ENCODE measurements at regions of chr7 and their contacts with region 1.

Region 1: DNA sequence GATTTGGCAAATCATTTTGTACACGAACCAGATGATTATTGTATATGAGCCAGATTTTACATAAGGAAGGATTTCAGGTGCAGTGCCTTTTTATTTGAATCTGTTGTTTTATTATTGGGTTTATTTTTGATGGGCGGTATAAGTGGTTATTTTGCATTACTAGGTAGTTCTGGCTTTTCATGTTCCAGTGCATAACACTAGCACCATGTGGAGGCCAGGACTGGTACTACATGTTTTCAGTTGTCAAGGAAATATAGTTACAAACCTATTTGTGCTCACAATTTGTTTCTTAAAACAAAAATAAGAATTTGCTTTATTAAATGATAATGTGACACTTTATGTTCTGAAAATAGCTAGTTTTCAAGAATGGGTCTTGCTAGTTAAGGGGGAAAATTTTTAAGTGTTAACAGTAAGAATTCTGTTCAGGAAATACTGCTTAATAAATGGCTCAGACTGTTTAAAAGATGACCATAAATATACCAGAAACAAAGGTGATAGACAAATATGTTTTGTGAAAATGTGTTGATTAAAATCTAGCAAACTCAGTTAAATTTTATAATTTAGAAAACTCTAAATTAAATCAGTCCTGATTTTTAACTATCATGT is 7.1 kb upstream of the SEMA3E start:
- DNase-seq: peak; percentile 54
- H3K4me3 ChIP-seq: no peak overlapping the region
- H3K27ac ChIP-seq: no peak overlapping the region
- H3K4me1 ChIP-seq: no peaks in the 10 kb centered on the region
- H3K27me3 ChIP-seq: peaks cover 35% of the 10 kb centered on the region
- CTCF ChIP-seq: peak; percentile 85

Region 2: GRCh38 chr7:83410989-83411591 is 245.0 kb before region 1 on chr7:
- CTCF ChIA-PET with region 1: no interaction called
- POLR2A ChIA-PET with region 1: no interaction called
- intact Hi-C with region 1: loop called (anchors 1 kb)
- DNase-seq: peak; percentile 58
- H3K4me3 ChIP-seq: no peak overlapping the region
- H3K27ac ChIP-seq: no peak overlapping the region
- H3K4me1 ChIP-seq: no peaks in the 10 kb centered on the region
- H3K27me3 ChIP-seq: peaks cover 47% of the 10 kb centered on the region
- CTCF ChIP-seq: peak; percentile 73

Region 3: GRCh38 chr7:83672157-83672556 is 16.1 kb after region 1 on chr7:
- CTCF ChIA-PET with region 1: no interaction called
- POLR2A ChIA-PET with region 1: interaction called, 18 read pairs
- intact Hi-C with region 1: no loop called
- DNase-seq: no peak
- H3K4me3 ChIP-seq: no peak overlapping the region
- H3K27ac ChIP-seq: no peak overlapping the region
- H3K4me1 ChIP-seq: no peaks in the 10 kb centered on the region
- H3K27me3 ChIP-seq: peaks cover 4% of the 10 kb centered on the region
- CTCF ChIP-seq: no peak